ENCODE measurements at regions of chr5 and their contacts with region 1.

Region 1: DNA sequence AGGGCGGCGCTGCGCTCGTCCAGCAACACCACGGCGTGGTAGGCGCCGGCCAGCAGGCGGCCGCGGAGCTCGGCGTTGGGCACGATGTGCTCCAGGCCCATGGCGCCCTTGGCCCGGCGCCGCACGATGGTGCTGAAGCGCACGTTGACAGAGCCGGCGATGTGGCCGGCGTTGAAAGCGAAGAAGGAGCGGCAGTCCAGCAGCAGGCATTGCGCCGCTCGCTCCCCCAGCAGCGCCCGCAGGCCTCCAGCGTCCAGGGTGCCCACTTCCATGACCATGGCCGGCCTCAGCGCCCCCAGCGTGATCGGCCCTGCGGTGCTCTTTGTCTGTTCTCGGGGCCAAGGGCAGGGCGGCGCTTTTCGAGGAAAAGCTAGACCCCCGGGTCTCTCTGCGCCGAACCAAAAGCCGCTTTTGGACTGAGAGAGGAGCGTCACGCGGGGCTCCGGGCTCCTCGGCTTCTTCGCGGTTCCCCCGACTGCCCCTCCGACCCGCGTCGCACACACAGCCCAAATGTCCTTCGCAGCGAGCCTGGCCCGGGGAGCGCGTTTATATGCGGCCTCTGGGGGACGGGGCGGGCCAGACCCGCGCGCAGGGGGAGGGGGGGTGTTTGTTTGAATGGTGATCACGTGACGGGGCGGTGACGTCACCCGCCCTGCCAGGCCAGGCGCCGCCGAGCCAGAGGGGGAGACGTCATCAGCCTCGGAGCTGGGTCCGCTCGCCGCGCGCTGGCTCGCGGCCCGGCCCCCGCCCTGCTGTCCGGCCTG is at the start of gene DUSP1:
- DNase-seq: peak; percentile 99
- ATAC-seq: peak; percentile 60
- H3K4me3 Mint-ChIP-seq: peak within 1 kb of the TSS; percentile 82
- H3K27ac Mint-ChIP-seq: peak within 1 kb of the TSS; percentile 97
- H3K4me1 Mint-ChIP-seq: peaks cover 67% of the 10 kb centered on the region
- H3K27me3 Mint-ChIP-seq: no peaks in the 10 kb centered on the region
- total RNA-seq, gene DUSP1: 6.7 to 7.4 TPM

Region 2: GRCh38 chr5:172006321-172007174 is 764.3 kb before region 1 on chr5 and contains the start of gene FBXW11:
- CTCF ChIA-PET with region 1: no interaction called
- POLR2A ChIA-PET with region 1: no interaction called
- intact Hi-C with region 1: loop called in 1 of 2 experiments (anchors 5 kb)
- DNase-seq: peak; percentile 97
- ATAC-seq: peak; percentile 85
- H3K4me3 Mint-ChIP-seq: peak within 1 kb of the TSS; percentile 92
- H3K27ac Mint-ChIP-seq: peak within 1 kb of the TSS; percentile 98
- H3K4me1 Mint-ChIP-seq: peaks cover 43% of the 10 kb centered on the region
- H3K27me3 Mint-ChIP-seq: no peaks in the 10 kb centered on the region
- total RNA-seq, gene FBXW11: 33.8 to 39.5 TPM

Region 3: DNA sequence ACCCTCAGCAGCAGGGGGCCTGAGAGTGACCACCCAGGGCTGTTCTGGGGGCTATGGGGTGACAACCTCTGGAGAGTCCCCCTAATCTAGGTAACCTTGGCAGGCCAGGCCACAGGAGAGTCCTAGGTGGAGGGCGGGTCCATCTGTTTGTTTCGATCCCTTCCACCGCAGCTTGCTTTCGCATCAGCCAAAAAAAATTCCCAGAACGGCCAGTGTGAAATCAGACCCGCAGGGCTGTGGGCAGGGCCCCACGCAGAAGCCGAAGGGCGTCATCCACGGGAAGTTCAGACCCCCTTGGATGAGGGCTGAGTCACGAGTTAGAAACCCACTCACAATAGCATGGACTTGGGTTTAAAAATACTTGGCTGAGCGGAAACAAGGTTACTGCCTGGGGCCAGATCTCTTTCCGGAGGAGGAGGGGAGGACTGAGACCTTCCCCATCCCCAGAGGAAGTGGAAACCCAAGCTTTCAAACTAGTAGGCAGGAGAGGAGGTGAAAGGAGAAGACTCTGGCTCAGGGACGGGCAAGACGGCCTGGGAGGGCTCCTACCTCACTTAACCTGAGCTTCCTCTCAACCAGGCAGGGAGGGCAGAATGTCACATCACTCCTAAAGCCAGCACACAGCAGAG is 591.4 kb before region 1 on chr5:
- CTCF ChIA-PET with region 1: no interaction called
- POLR2A ChIA-PET with region 1: no interaction called
- intact Hi-C with region 1: loop called in 1 of 2 experiments (anchors 5 kb)
- DNase-seq: peak; percentile 60
- ATAC-seq: peak; percentile 8
- H3K4me3 Mint-ChIP-seq: peak overlapping the region; percentile 75
- H3K27ac Mint-ChIP-seq: peak overlapping the region; percentile 99
- H3K4me1 Mint-ChIP-seq: peaks cover 98% of the 10 kb centered on the region
- H3K27me3 Mint-ChIP-seq: no peaks in the 10 kb centered on the region

Region 4: GRCh38 chr5:172806897-172807672 is 36.2 kb after region 1 on chr5:
- CTCF ChIA-PET with region 1: interaction called, 7 read pairs
- POLR2A ChIA-PET with region 1: interaction called, 19 read pairs
- intact Hi-C with region 1: loop called in 1 of 2 experiments (anchors 1 kb)
- DNase-seq: peak; percentile 98
- ATAC-seq: peak; percentile 97
- H3K4me3 Mint-ChIP-seq: peak overlapping the region; percentile 54
- H3K27ac Mint-ChIP-seq: peak overlapping the region; percentile 84
- H3K4me1 Mint-ChIP-seq: peaks cover 17% of the 10 kb centered on the region
- H3K27me3 Mint-ChIP-seq: no peaks in the 10 kb centered on the region

Region 5: GRCh38 chr5:172932313-172933017 is 161.6 kb after region 1 on chr5:
- CTCF ChIA-PET with region 1: interaction called, 4 read pairs
- POLR2A ChIA-PET with region 1: no interaction called
- intact Hi-C with region 1: loop called (anchors 1 kb)
- DNase-seq: peak; percentile 88
- ATAC-seq: peak; percentile 97
- H3K4me3 Mint-ChIP-seq: no peak overlapping the region
- H3K27ac Mint-ChIP-seq: no peak overlapping the region
- H3K4me1 Mint-ChIP-seq: peaks cover 4% of the 10 kb centered on the region
- H3K27me3 Mint-ChIP-seq: no peaks in the 10 kb centered on the region

Region 6: GRCh38 chr5:173144200-173145176 is 373.6 kb after region 1 on chr5 and contains the start of gene BNIP1:
- CTCF ChIA-PET with region 1: no interaction called
- POLR2A ChIA-PET with region 1: no interaction called
- intact Hi-C with region 1: loop called in 1 of 2 experiments (anchors 1 kb)
- DNase-seq: peak; percentile 98
- ATAC-seq: peak; percentile 94
- H3K4me3 Mint-ChIP-seq: peak within 1 kb of the TSS; percentile 99
- H3K27ac Mint-ChIP-seq: peak within 1 kb of the TSS; percentile 99
- H3K4me1 Mint-ChIP-seq: peaks cover 10% of the 10 kb centered on the region
- H3K27me3 Mint-ChIP-seq: no peaks in the 10 kb centered on the region
- total RNA-seq, gene BNIP1: 24.2 to 26.8 TPM